WTC11 (cell line): ENCODE measurements at regions of chr19 and their contacts with region 1.

Region 1: GRCh38 chr19:49421039-49421877 is 2.0 kb downstream of the PTH2 start:
- DNase-seq: peak; percentile 100
- ATAC-seq: peak; percentile 75
- H3K4me3 Mint-ChIP-seq: peak overlapping the region; percentile 49
- H3K27ac Mint-ChIP-seq: peak overlapping the region; percentile 84
- H3K4me1 Mint-ChIP-seq: peaks cover 78% of the 10 kb centered on the region
- H3K27me3 Mint-ChIP-seq: peaks cover 75% of the 10 kb centered on the region
- CTCF ChIP-seq: no peak

Region 2: GRCh38 chr19:49403404-49404187 is 17.7 kb before region 1 on chr19:
- CTCF ChIA-PET with region 1: interaction called, 30 read pairs
- POLR2A ChIA-PET with region 1: interaction called, 13 read pairs
- DNase-seq: peak; percentile 81
- ATAC-seq: peak; percentile 98
- H3K4me3 Mint-ChIP-seq: peak overlapping the region; percentile 44
- H3K27ac Mint-ChIP-seq: peak overlapping the region; percentile 99
- H3K4me1 Mint-ChIP-seq: peaks cover 45% of the 10 kb centered on the region
- H3K27me3 Mint-ChIP-seq: peaks cover 4% of the 10 kb centered on the region; the same call in 1 of the 2 replicates
- CTCF ChIP-seq: no peak

Region 3: GRCh38 chr19:49409441-49410029 is 11.7 kb before region 1 on chr19:
- CTCF ChIA-PET with region 1: interaction called, 11 read pairs
- POLR2A ChIA-PET with region 1: no interaction called
- DNase-seq: no peak
- ATAC-seq: no peak
- H3K4me3 Mint-ChIP-seq: no peak overlapping the region
- H3K27ac Mint-ChIP-seq: no peak overlapping the region
- H3K4me1 Mint-ChIP-seq: peaks cover 30% of the 10 kb centered on the region
- H3K27me3 Mint-ChIP-seq: peaks cover 15% of the 10 kb centered on the region; the same call in 1 of the 2 replicates
- CTCF ChIP-seq: no peak

Region 4: DNA sequence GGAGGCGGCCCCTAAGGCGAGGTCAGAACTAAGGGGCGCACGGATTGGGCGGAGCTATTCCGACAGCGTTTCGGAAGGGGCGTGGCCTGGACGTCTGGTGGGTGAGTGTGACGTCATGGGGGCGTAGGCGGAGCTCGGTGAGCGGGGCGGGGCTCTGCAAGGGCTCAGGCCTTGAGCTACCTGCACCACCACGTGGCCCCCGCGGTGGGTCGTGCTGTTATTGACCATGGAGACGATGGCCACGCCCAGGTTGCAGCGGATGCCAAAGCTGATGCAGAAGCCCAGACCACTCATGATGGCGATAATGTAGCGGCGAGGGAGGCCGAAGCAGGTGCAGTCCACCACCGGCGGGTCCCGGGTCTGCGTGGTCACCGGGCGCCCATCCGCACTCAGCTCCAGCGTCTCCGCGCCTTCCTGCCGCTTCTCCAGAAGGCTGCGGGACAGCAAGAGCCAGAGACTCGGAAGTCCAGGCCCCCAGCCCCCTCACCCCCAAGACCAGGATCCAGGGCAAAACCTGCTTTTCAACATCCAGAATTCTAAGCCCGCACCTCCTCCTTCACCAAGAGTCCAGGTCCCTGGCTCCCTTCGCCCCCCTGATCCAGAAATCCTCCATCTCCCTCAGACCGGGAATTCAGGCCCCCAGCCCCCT is 15.2 kb after region 1 on chr19:
- CTCF ChIA-PET with region 1: interaction called, 34 read pairs
- POLR2A ChIA-PET with region 1: interaction called, 5 read pairs
- DNase-seq: peak; percentile 98
- ATAC-seq: peak; percentile 67
- H3K4me3 Mint-ChIP-seq: peak overlapping the region; percentile 66
- H3K27ac Mint-ChIP-seq: no peak overlapping the region
- H3K4me1 Mint-ChIP-seq: peaks cover 35% of the 10 kb centered on the region
- H3K27me3 Mint-ChIP-seq: peaks cover 98% of the 10 kb centered on the region
- CTCF ChIP-seq: no peak

Region 5: DNA sequence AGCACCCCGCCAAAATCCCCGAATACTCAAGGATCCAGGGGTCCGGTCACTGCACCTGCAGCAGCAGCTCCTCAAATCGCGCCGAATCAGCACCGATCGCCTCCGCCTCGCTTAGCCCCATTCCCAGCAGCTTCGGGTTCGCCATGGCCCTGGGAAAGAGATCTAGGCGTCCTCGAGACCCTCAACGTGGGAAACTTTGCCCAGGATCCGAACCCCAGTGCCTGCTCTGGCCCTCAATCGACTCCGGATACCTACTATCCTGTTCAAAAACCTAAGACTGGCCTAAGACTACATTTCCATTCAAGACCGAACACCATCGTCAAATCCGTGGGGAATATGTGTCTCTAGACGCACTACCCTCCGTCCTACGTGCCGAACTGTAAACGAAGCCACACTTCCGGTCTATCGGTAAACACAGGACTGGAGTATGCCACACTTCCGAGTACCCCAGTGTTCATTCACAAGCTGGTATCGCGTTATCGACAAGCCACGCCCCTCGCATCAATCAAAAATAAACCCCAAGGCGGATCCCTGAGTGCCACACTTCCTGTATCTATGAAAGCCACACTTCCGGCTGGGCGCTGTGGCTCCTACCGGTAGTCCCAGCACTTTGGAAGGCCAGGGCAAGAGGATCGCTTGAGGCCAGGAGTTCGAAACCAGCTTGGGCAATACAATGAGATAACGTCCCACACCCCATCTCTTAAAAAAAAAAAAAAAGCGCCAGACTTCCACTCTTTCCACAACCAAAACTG is 30.3 kb after region 1 on chr19 and contains the start of gene PIH1D1:
- CTCF ChIA-PET with region 1: interaction called, 12 read pairs
- POLR2A ChIA-PET with region 1: interaction called, 3 read pairs
- DNase-seq: peak; percentile 96
- ATAC-seq: peak; percentile 59
- H3K4me3 Mint-ChIP-seq: peak within 1 kb of the TSS; percentile 94
- H3K27ac Mint-ChIP-seq: peak within 1 kb of the TSS; percentile 100
- H3K4me1 Mint-ChIP-seq: peaks cover 36% of the 10 kb centered on the region
- H3K27me3 Mint-ChIP-seq: no peaks in the 10 kb centered on the region
- CTCF ChIP-seq: no peak
- total RNA-seq, gene PIH1D1: 153 to 170 TPM (median 156 TPM) in 3 replicates

Region 6: DNA sequence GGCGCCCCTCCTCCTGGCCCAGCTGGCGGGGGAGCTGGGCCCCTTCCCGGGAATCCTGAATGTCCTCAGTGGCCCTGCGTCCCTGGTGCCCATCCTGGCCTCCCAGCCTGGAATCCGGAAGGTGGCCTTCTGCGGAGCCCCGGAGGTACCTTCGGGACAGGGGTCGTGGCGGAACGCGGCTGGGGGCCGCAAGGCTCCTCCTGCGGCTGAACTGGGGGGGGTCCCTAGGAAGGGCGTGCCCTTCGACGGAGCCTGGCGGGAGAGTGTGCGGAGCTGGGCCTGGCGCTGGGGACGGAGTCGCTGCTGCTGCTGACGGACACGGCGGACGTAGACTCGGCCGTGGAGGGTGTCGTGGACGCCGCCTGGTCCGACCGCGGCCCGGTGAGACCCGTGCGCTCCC is 40.4 kb after region 1 on chr19:
- CTCF ChIA-PET with region 1: no interaction called
- POLR2A ChIA-PET with region 1: no interaction called
- DNase-seq: no peak
- ATAC-seq: peak; percentile 57
- H3K4me3 Mint-ChIP-seq: no peak overlapping the region
- H3K27ac Mint-ChIP-seq: no peak overlapping the region
- H3K4me1 Mint-ChIP-seq: no peaks in the 10 kb centered on the region
- H3K27me3 Mint-ChIP-seq: no peaks in the 10 kb centered on the region
- CTCF ChIP-seq: no peak